ENCODE measurements at regions of chr10 and their contacts with region 1.

Region 1: DNA sequence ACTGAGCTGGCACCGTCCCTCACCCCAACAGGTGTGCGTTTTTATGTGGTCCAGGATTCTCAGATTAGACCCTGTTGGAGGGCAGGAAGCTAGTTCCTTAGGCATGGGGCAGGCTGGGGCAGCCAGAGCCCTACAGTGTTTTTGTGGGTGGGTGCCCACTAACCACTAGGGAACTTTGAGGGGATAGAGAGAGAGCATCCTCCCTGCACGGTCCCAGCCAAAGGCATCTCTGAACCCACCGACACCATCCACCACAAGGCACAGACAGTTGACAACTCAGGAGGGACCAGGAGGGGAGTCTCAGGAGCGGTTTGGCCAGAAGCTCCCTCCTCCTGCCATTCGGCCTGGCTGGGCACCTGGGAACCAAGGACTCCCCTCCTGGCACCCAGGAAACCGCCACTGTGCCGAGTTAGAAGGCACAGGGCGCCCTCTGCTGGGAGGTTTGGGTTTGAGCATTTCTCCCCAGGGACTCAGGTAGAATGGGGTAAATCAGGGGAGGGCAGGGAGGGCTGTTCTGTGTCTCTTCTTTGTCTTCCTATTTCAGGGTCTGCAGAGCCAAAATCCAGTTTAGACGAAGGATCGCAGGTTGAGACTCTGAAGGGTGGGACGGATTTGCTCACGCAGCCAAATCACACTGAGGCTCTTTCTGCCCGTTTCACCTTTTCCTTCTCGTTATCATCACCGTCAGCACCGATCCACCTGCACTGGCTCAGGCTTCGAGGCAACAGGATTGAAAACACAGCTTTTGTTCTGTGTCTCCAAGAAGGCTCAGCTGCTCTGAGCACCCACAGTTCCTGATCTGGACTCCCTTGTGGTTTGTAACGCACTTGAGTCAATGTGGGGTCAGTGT is 84.8 kb upstream of the COL13A1 start:
- DNase-seq: peak; percentile 73
- H3K4me3 Mint-ChIP-seq: no peak overlapping the region
- H3K27ac Mint-ChIP-seq: no peak overlapping the region
- H3K4me1 Mint-ChIP-seq: no peaks in the 10 kb centered on the region
- H3K27me3 Mint-ChIP-seq: peaks cover 8% of the 10 kb centered on the region

Region 2: GRCh38 chr10:69644658-69645295 is 72.2 kb before region 1 on chr10:
- CTCF ChIA-PET with region 1: interaction called, 89 read pairs
- POLR2A ChIA-PET with region 1: no interaction called
- intact Hi-C with region 1: loop called (anchors 1 kb)
- DNase-seq: peak; percentile 62
- H3K4me3 Mint-ChIP-seq: no peak overlapping the region
- H3K27ac Mint-ChIP-seq: no peak overlapping the region
- H3K4me1 Mint-ChIP-seq: no peaks in the 10 kb centered on the region
- H3K27me3 Mint-ChIP-seq: no peaks in the 10 kb centered on the region

Region 3: GRCh38 chr10:69696073-69696731 is 20.7 kb before region 1 on chr10:
- CTCF ChIA-PET with region 1: interaction called, 10 read pairs
- POLR2A ChIA-PET with region 1: no interaction called
- intact Hi-C with region 1: no loop called
- DNase-seq: peak; percentile 35
- H3K4me3 Mint-ChIP-seq: no peak overlapping the region
- H3K27ac Mint-ChIP-seq: no peak overlapping the region
- H3K4me1 Mint-ChIP-seq: no peaks in the 10 kb centered on the region
- H3K27me3 Mint-ChIP-seq: peaks cover 9% of the 10 kb centered on the region

Measured in activated CD4-positive, alpha-beta memory T cell treated with anti-CD3 and anti-CD28 coated beads for 36 hours (primary cell).